Sigmoid colon (tissue), 7 donors: ENCODE measurements at regions of chr17 and their contacts with region 1.

Region 1: GRCh38 chr17:6666077-6666521 is 14.5 kb downstream of the C17orf100 start:
- DNase-seq: peak; percentile 89
- H3K4me3 ChIP-seq: no peak overlapping the region
- H3K27ac ChIP-seq: no peak overlapping the region
- H3K4me1 ChIP-seq: no peaks in the 10 kb centered on the region
- H3K27me3 ChIP-seq: peaks cover 0 to 14% (median 0%) of the 10 kb centered on the region in 3 donors
- CTCF ChIP-seq: peak; percentile 72 to 82 (median 80)
- EP300 ChIP-seq: no peak
- POLR2A ChIP-seq: no peak

Region 2: GRCh38 chr17:6603744-6604325 is 62.3 kb before region 1 on chr17:
- intact Hi-C with region 1: no loop called
- DNase-seq: no peak
- H3K4me3 ChIP-seq: no peak overlapping the region
- H3K27ac ChIP-seq: peak overlapping the region in 1 of 4 donors; percentile 25
- H3K4me1 ChIP-seq: peaks cover 0 to 12% (median under 1%) of the 10 kb centered on the region in 4 donors
- H3K27me3 ChIP-seq: no peaks in the 10 kb centered on the region
- CTCF ChIP-seq: no peak
- EP300 ChIP-seq: no peak
- POLR2A ChIP-seq: no peak

Region 3: GRCh38 chr17:6843241-6843880 is 177.3 kb after region 1 on chr17:
- intact Hi-C with region 1: loop called (anchors 2 kb)
- DNase-seq: no peak
- H3K4me3 ChIP-seq: no peak overlapping the region
- H3K27ac ChIP-seq: no peak overlapping the region
- H3K4me1 ChIP-seq: no peaks in the 10 kb centered on the region
- H3K27me3 ChIP-seq: peaks cover 0 to 28% (median 7%) of the 10 kb centered on the region in 3 donors
- CTCF ChIP-seq: peak in 2 of 4 experiments; percentile 22 to 53
- EP300 ChIP-seq: no peak
- POLR2A ChIP-seq: no peak

Region 4: GRCh38 chr17:6913608-6914443 is 247.7 kb after region 1 on chr17:
- intact Hi-C with region 1: loop called (anchors 5 kb)
- DNase-seq: peak; percentile 79
- H3K4me3 ChIP-seq: peak overlapping the region in 2 of 4 donors; percentile 6 to 23
- H3K27ac ChIP-seq: no peak overlapping the region
- H3K4me1 ChIP-seq: peaks cover 0 to 10% (median 3%) of the 10 kb centered on the region in 4 donors
- H3K27me3 ChIP-seq: peaks cover 0 to 34% (median 6%) of the 10 kb centered on the region in 3 donors
- CTCF ChIP-seq: peak; percentile 58 to 80 (median 68)
- EP300 ChIP-seq: no peak
- POLR2A ChIP-seq: no peak

Region 5: GRCh38 chr17:7004398-7005253 is 338.5 kb after region 1 on chr17:
- intact Hi-C with region 1: loop called (anchors 5 kb)
- DNase-seq: no peak
- H3K4me3 ChIP-seq: no peak overlapping the region
- H3K27ac ChIP-seq: no peak overlapping the region
- H3K4me1 ChIP-seq: peaks cover 0 to 3% (median 1%) of the 10 kb centered on the region in 4 donors
- H3K27me3 ChIP-seq: no peaks in the 10 kb centered on the region
- CTCF ChIP-seq: peak; percentile 15 to 66 (median 64)
- EP300 ChIP-seq: no peak
- POLR2A ChIP-seq: no peak